PC-3 (cell line): ENCODE measurements at regions of chr11 and their contacts with region 1.

Region 1: GRCh38 chr11:9838961-9839360 is 175.1 kb downstream of the SWAP70 start:
- DNase-seq: peak; percentile 94
- ATAC-seq: peak; percentile 98
- H3K4me3 ChIP-seq: peak overlapping the region; percentile 19; the same call in 1 of the 2 replicates
- H3K27ac ChIP-seq: peak overlapping the region; percentile 75
- H3K4me1 ChIP-seq: peaks cover 34% of the 10 kb centered on the region
- H3K27me3 ChIP-seq: no peaks in the 10 kb centered on the region
- CTCF ChIP-seq: no peak

Region 2: DNA sequence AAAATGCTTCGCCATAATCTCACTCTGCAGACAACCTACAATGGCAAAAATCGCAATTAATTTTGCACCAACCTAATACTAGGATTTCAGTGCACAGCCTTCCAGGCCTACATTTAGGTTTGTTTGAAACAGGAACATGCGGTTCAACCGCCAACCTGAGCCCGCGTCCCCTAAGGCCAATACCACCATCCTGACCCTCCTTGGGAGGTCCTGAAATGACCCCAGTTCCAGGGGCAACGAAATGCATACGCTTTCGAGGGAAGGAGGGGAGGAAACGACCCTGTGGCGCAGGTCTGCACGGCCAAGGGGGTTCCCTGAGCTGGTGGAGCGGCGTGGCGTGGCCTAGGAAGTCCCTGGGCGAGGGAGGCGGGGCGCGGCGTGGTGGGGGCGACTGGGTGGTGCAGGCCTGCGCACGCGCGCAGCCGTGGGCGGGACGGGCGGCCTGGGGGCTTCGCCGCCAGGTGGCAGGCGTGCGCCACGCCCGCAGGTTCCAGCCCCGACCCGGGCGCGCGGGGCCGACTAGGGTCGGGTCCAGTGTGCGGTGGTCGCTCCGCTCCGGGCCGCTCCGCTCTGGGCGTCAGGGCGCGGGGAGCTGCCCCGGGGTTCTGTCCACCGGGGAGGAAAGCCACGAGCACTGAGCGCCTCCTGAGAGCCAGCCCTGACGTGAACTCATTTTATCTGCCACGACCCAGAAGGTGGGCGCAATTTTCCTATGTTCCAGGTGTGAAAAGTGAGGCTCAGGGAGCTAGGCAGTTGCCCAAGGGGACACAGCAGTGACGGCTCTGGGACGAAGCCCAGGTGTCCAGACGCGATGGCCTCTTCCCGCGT is 80.9 kb before region 1 on chr11:
- CTCF ChIA-PET with region 1: no interaction called
- POLR2A ChIA-PET with region 1: no interaction called
- intact Hi-C with region 1: loop called (anchors 1 kb)
- DNase-seq: peak; percentile 76
- ATAC-seq: peak; percentile 39
- H3K4me3 ChIP-seq: peak overlapping the region; percentile 87
- H3K27ac ChIP-seq: peak overlapping the region; percentile 17; the same call in 1 of the 2 replicates
- H3K4me1 ChIP-seq: peaks cover 42% of the 10 kb centered on the region
- H3K27me3 ChIP-seq: no peaks in the 10 kb centered on the region
- CTCF ChIP-seq: peak; percentile 66

Region 3: DNA sequence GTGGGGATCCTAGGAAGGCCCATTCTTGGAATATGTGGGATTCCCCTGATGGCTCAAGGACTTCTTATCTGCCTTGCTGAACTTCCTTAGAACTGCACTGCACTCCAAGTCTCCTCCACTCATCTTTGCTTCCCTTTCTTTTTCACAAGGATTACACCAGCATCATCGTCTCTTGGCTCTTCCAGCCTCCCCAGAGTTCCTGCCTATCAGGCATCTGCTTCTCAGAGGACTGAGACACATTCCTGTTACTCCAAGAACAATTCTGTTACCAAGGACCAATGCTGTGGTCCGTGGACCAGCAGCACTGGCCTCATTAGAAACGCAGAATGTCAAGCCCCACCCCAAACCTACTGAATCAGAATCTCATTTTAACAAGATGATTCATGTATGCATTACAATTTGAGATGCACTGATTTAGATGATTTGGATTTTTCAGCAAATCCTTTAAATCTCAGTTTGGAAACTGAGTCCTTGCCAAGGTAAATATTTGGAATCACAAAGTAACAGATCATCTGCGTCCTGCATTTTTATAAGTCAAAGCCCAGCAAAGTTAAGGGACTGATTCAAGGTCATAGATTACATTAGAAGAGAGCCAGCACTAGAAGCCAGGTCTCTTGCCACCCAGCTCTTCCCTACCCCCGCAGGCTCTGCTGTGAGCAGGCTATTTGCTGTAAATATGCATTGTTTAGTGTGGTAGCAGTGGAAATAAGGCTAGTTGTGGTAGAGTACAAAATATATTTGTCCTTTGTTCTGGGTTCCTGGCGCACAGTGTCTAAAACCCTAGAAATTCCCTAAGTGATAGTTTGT is 64.2 kb before region 1 on chr11:
- CTCF ChIA-PET with region 1: no interaction called
- POLR2A ChIA-PET with region 1: no interaction called
- intact Hi-C with region 1: loop called (anchors 2 kb)
- DNase-seq: peak; percentile 84
- ATAC-seq: peak; percentile 91
- H3K4me3 ChIP-seq: no peak overlapping the region
- H3K27ac ChIP-seq: no peak overlapping the region
- H3K4me1 ChIP-seq: peaks cover 28% of the 10 kb centered on the region
- H3K27me3 ChIP-seq: no peaks in the 10 kb centered on the region
- CTCF ChIP-seq: no peak

Region 4: GRCh38 chr11:9815486-9816136 is 23.4 kb before region 1 on chr11:
- CTCF ChIA-PET with region 1: no interaction called
- POLR2A ChIA-PET with region 1: no interaction called
- intact Hi-C with region 1: no loop called
- DNase-seq: peak; percentile 40
- ATAC-seq: peak; percentile 79
- H3K4me3 ChIP-seq: no peak overlapping the region
- H3K27ac ChIP-seq: no peak overlapping the region
- H3K4me1 ChIP-seq: peaks cover 9% of the 10 kb centered on the region; the same call in 1 of the 2 replicates
- H3K27me3 ChIP-seq: no peaks in the 10 kb centered on the region
- CTCF ChIP-seq: no peak

Region 5: GRCh38 chr11:9851366-9851765 is 12.4 kb after region 1 on chr11:
- CTCF ChIA-PET with region 1: no interaction called
- POLR2A ChIA-PET with region 1: interaction called, 5 read pairs
- intact Hi-C with region 1: loop called (anchors 1 kb)
- DNase-seq: peak; percentile 38
- ATAC-seq: peak; percentile 76
- H3K4me3 ChIP-seq: no peak overlapping the region
- H3K27ac ChIP-seq: no peak overlapping the region
- H3K4me1 ChIP-seq: no peaks in the 10 kb centered on the region
- H3K27me3 ChIP-seq: no peaks in the 10 kb centered on the region
- CTCF ChIP-seq: no peak